Mammary epithelial cell (primary cell): ENCODE measurements at regions of chr10 and their contacts with region 1.

Region 1: GRCh38 chr10:74826142-74827044 is at the start of gene KAT6B:
- DNase-seq: peak; percentile 100
- H3K4me3 ChIP-seq: peak within 1 kb of the TSS; percentile 81 to 95 (median 84)
- H3K27ac ChIP-seq: peak within 1 kb of the TSS; percentile 86
- H3K4me1 ChIP-seq: peaks cover 6% of the 10 kb centered on the region
- H3K27me3 ChIP-seq: no peaks in the 10 kb centered on the region
- CTCF ChIP-seq: peak in 1 of 2 donors; percentile 39
- total RNA-seq, gene KAT6B: 12.1 to 22.2 TPM

Region 2: GRCh38 chr10:74262856-74263255 is 563.5 kb before region 1 on chr10:
- CTCF ChIA-PET with region 1: interaction called, 4 read pairs
- dilution Hi-C with region 1: no loop called
- in situ Hi-C with region 1: no loop called
- intact Hi-C with region 1: loop called (anchors 10 kb)
- DNase-seq: no peak
- H3K4me3 ChIP-seq: no peak overlapping the region
- H3K27ac ChIP-seq: no peak overlapping the region
- H3K4me1 ChIP-seq: no peaks in the 10 kb centered on the region
- H3K27me3 ChIP-seq: no peaks in the 10 kb centered on the region
- CTCF ChIP-seq: no peak

Region 3: GRCh38 chr10:74871595-74872382 is 45.4 kb after region 1 on chr10:
- CTCF ChIA-PET with region 1: no interaction called
- dilution Hi-C with region 1: no loop called
- in situ Hi-C with region 1: no loop called
- intact Hi-C with region 1: loop called (anchors 2 kb)
- DNase-seq: peak; percentile 88
- H3K4me3 ChIP-seq: no peak overlapping the region
- H3K27ac ChIP-seq: no peak overlapping the region
- H3K4me1 ChIP-seq: peaks cover 10% of the 10 kb centered on the region
- H3K27me3 ChIP-seq: no peaks in the 10 kb centered on the region
- CTCF ChIP-seq: no peak

Region 4: DNA sequence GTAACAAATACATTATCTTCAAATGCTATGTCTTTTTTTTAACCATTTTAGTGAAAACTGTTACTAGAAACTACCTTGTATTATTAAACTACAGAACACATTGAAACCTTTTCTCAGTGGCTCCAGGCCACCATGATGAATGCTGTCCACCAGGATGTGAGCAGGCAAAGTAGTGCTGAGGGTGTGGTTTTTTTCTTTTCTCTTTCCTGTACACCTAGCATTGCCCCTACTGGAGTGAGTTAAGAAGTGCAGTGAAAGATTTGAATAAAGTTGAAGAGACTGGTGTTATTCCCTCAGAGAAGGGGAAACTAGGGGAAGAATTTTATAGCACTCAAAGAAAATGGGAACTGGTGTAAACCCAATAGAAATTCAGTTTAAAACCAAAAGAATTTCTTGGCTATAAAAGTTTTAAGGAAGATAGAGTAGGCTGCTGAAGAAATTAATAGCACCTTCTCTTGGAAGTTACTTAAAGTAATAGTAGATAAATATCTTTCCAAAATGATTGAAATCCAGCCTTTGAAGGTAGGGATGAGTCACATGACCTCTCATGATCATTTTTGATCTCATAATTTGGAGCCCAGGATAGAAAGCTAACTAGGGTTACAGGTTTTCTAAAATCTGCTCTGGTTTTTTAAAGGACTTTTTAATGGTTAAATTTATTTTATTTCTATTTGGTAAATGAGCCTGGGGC is 165.2 kb after region 1 on chr10:
- CTCF ChIA-PET with region 1: no interaction called
- dilution Hi-C with region 1: no loop called
- in situ Hi-C with region 1: no loop called
- intact Hi-C with region 1: loop called (anchors 1 kb)
- DNase-seq: peak; percentile 53
- H3K4me3 ChIP-seq: no peak overlapping the region
- H3K27ac ChIP-seq: no peak overlapping the region
- H3K4me1 ChIP-seq: no peaks in the 10 kb centered on the region
- H3K27me3 ChIP-seq: no peaks in the 10 kb centered on the region
- CTCF ChIP-seq: peak; percentile 49 to 59

Region 5: DNA sequence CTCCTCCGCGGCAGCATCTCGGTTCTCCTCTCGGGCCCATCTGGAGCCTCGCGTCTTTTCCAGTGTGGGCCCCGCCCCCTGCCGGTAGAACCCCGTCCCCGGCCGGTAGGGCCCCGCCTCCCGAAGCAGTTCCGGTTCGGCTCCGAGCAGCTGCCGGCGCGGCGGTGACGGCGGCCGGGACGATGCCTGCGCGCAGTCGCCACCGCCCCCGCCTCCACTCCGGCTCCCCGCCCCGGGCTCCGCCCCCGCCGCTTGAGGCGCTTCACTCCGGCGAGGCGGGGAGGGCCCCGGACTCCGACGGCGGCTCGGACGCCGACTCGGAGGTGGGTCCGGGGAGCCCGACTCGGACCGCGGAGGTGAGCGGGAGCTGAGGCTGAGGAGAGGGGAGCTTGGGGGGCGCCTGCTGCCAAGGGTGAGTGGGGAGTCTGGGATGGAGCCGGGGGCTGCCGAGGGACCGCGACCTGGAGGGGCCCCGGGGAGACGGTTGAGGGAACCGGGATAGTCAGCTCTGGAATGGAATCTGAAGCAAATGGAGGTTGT is 285.0 kb after region 1 on chr10 and contains the start of gene SAMD8:
- CTCF ChIA-PET with region 1: no interaction called
- dilution Hi-C with region 1: no loop called
- in situ Hi-C with region 1: no loop called
- intact Hi-C with region 1: loop called (anchors 2 kb)
- DNase-seq: peak; percentile 93
- H3K4me3 ChIP-seq: peak within 1 kb of the TSS; percentile 91 to 98 (median 95)
- H3K27ac ChIP-seq: peak within 1 kb of the TSS; percentile 77
- H3K4me1 ChIP-seq: peaks cover 20% of the 10 kb centered on the region
- H3K27me3 ChIP-seq: no peaks in the 10 kb centered on the region
- CTCF ChIP-seq: peak in 1 of 2 donors; percentile 14
- total RNA-seq, gene SAMD8: 30.1 to 39.5 TPM